Upper lobe of right lung (tissue), 1 donor: ENCODE measurements at regions of chr11 and their contacts with region 1.

Region 1: DNA sequence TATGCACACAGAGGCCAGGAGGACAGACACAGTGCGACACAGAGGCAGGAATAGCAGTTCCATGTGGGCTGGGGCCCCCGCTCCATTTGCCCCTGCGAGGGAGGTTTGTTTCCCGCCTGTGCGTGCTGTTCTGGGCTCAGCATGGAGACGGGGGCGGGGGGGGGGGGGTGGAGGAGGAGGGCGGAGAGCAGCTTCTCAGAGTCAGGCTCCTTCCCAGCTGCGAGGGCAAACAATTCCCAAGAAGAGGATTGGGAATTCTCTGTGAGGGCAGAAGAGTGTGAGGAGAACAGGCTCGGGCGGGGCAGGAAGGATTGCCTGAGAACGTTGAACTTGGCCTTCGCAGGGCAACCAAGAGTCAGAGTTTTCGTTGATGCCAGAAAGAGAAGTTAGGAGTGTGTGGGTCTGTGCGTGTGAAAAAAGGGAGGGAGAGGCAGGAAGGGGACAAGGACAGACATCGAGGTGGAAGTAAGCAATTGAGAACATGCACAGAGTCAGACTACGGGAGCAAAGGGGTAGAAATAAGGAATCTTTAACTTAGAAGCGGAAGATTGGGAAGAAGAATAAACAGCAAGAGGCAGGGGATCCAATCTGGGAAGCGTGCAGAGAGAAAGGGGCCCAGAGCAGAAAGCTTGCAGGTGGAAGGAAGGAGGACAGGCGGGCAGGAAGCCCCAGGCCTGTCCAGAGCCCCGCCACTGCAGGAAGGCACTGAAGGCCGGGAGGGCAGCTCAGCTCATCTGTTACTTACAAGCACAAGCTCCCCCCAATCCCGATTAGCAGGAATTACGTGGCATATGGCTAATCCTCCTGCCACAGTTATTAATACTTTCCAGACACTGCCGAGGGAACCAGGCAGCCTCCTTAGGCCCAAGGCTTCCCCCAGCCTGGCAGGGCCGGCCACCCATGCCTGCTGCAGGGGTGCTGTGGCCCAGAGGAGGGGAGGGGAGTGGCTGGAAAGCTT is 15.6 kb upstream of the JAM3 start:
- DNase-seq: no peak
- ATAC-seq: no peak
- H3K4me3 ChIP-seq: no peak overlapping the region
- H3K27ac ChIP-seq: no peak overlapping the region
- H3K4me1 ChIP-seq: peaks cover 7% of the 10 kb centered on the region
- H3K27me3 ChIP-seq: no peaks in the 10 kb centered on the region
- CTCF ChIP-seq: no peak

Region 2: GRCh38 chr11:133867456-133867855 is 185.8 kb before region 1 on chr11:
- intact Hi-C with region 1: no loop called
- DNase-seq: no peak
- ATAC-seq: no peak
- H3K4me3 ChIP-seq: no peak overlapping the region
- H3K27ac ChIP-seq: no peak overlapping the region
- H3K4me1 ChIP-seq: no peaks in the 10 kb centered on the region
- H3K27me3 ChIP-seq: no peaks in the 10 kb centered on the region
- CTCF ChIP-seq: no peak

Region 3: DNA sequence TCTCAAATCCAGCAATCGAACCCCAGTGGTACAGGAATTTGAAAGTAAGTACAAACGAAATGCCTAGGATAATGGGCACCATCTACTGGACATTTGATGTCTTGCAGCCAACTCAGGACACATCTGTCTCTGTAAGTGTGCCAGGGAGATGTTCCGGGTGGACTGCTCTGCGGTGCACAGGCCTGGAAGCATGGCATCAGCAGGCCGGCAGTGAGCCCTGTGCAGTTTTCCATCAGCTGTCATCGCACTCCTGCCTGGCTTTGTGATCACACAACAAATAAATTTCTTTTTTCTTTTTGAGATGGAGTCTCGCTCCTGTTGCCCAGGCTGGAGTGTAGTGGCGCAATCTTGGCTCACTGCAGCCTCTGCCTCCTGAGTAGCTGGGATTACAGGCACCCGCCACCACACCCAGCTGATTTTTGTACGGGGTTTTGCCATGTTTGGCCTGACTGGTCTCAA is 86.6 kb after region 1 on chr11:
- intact Hi-C with region 1: loop called (anchors 2 kb)
- DNase-seq: no peak
- ATAC-seq: peak; percentile 87
- H3K4me3 ChIP-seq: no peak overlapping the region
- H3K27ac ChIP-seq: no peak overlapping the region
- H3K4me1 ChIP-seq: no peaks in the 10 kb centered on the region
- H3K27me3 ChIP-seq: no peaks in the 10 kb centered on the region
- CTCF ChIP-seq: peak; percentile 85

Region 4: DNA sequence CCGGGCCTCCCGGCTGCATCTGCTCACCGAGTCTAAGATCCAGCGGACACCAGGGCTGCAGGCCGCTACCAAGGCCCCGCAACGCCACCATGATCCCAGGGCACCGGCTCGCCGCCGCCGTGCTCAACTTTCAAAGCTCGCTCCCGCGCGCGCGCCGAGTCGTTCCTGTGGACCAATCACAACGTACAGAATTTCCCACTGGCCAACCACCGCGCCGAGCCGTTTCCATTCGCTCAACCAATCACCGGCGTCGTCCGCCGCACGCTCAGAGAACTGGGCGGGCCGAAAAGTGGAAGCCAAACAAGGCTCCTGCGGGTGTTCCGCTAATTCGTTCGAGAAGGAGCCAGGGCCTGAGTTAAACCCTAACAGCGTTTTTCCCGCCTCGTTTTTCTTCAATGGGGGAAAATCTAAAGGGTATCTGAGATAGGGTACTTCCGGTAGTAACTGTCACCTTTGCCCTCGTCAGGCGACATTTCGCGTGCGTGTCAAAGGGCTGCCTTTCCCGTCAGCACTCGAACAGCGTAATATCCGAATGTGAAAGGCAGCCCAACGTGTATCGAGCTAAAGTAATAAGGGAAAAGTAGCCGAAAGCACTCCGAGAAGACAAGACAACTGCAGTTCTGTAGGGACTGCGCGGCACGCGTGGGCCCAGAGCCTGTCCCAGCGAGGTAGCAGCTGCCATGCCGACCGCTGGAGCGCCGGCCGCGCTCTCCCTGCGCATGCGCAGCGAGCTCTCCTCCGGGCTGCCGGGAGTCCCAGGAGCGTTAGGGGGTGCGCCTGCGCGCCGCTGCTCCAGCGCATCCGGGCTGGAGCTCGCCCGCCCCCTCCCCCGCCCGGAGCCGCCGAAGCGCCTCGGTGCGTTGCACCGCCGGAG is 170.8 kb after region 1 on chr11 and contains the starts of genes NCAPD3 and VPS26B:
- intact Hi-C with region 1: no loop called
- DNase-seq: peak; percentile 98
- ATAC-seq: peak; percentile 94
- H3K4me3 ChIP-seq: peak within 1 kb of the TSS; percentile 86
- H3K27ac ChIP-seq: peak within 1 kb of the TSS; percentile 91
- H3K4me1 ChIP-seq: peaks cover 28% of the 10 kb centered on the region
- H3K27me3 ChIP-seq: no peaks in the 10 kb centered on the region
- CTCF ChIP-seq: no peak
- total RNA-seq, gene NCAPD3: 17.3 TPM
- total RNA-seq, gene VPS26B: 37.2 TPM